Heart right ventricle (tissue), 16 donors: ENCODE measurements at regions of chr17 and their contacts with region 1.

Region 1: GRCh38 chr17:66737524-66737923 is 97.4 kb upstream of the CACNG5 start:
- DNase-seq: peak; percentile 40 to 46
- ATAC-seq: peak; percentile 85 to 97 (median 93)
- H3K4me3 ChIP-seq: no peak overlapping the region
- H3K27ac ChIP-seq: no peak overlapping the region
- H3K4me1 ChIP-seq: peaks cover 0 to 10% (median 0%) of the 10 kb centered on the region in 9 donors
- H3K27me3 ChIP-seq: no peaks in the 10 kb centered on the region
- CTCF ChIP-seq: peak in 6 of 9 donors; percentile 34 to 56 (median 42)

Region 2: DNA sequence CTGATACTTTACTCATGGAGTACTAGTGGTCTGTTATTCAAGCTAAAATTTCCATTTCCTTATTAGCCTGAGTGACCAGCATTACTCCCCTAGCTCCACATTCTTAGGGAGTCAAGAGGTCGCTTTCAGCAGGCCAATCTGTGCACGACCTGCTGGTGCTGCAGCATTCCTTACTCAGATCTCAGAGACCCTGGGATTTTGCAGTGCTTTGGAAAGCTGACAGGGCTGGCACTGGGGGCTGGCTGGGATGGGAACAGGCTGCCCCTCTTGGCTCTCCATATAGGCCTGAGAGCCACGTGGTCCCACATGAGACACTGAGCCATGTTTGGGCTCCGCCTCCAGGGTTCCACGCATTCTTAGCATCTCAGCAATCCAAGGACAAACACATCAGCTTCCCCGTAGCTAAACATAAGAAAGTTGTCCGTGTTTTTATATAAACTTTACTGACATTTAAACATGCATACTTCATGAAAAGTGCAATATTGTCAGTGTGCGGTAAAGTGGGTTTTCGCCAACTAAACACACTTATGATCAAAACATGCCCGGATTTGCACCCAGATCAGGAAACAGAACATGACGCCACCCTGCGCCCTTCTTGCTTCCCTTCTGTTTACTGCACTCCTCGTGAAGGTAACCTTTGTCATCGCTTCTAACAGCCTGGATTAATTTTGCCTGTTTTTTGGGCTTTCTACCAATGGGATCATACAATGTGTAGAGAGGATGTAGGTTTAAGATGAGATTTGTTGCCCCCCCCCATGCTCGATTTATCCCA is 157.2 kb before region 1 on chr17:
- intact Hi-C with region 1: no loop called
- DNase-seq: peak; percentile 29 to 31
- ATAC-seq: peak in 7 of 8 donors; percentile 65 to 88 (median 78)
- H3K4me3 ChIP-seq: no peak overlapping the region
- H3K27ac ChIP-seq: peak overlapping the region in 6 of 10 donors; percentile 6 to 56 (median 8)
- H3K4me1 ChIP-seq: peaks cover 0 to 34% (median 21%) of the 10 kb centered on the region in 9 donors
- H3K27me3 ChIP-seq: no peaks in the 10 kb centered on the region
- CTCF ChIP-seq: no peak

Region 3: DNA sequence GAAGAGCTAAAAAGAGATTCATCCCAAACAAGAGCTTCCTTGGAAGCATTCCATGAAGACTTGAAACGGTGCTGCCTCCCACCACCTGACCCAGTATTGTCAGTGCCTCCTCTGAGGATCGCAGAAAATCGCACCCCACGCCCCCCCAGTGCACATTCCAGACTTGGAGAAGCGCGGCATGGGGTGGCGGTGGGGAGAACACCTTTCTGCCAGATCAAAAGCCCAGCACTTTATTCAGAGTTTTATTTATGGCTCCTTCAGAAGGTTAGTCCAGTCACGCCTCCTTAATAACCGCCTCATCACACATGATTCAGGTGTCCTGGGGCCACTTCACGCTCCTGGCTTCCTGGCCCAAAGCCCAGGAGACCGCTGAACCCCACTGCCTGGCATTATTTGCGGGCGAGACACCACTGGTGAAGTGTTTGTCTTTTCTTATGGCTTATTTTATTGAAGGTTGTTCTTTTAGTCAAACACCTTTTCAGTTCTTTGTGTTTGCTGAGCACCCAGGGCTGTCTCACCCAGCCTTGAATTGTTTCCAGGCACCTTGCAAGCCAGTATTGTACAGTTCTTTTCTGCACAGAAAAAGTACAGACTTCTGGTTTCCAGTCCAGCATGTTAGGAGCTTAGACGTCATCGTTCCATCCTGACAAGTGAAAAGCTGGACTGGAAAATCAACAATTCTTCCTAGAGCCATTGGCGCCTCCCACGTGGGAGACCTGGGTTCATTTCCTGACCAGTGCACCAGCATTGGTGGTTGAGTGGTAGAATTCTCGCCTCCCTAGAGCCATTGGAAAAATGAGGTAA is 17.8 kb after region 1 on chr17:
- intact Hi-C with region 1: no loop called
- DNase-seq: no peak
- ATAC-seq: no peak
- H3K4me3 ChIP-seq: no peak overlapping the region
- H3K27ac ChIP-seq: no peak overlapping the region
- H3K4me1 ChIP-seq: no peaks in the 10 kb centered on the region
- H3K27me3 ChIP-seq: no peaks in the 10 kb centered on the region
- CTCF ChIP-seq: no peak

Region 4: GRCh38 chr17:66787914-66788313 is 50.4 kb after region 1 on chr17:
- intact Hi-C with region 1: loop called in 1 of 10 experiments (anchors 1 kb)
- DNase-seq: no peak
- ATAC-seq: peak in 4 of 8 donors; percentile 23 to 78 (median 40)
- H3K4me3 ChIP-seq: no peak overlapping the region
- H3K27ac ChIP-seq: peak overlapping the region in 1 of 10 donors; percentile 25
- H3K4me1 ChIP-seq: peaks cover 0 to 36% (median 13%) of the 10 kb centered on the region in 9 donors
- H3K27me3 ChIP-seq: no peaks in the 10 kb centered on the region
- CTCF ChIP-seq: no peak

Region 5: GRCh38 chr17:66814570-66814969 is 77.0 kb after region 1 on chr17:
- intact Hi-C with region 1: no loop called
- DNase-seq: no peak
- ATAC-seq: no peak
- H3K4me3 ChIP-seq: no peak overlapping the region
- H3K27ac ChIP-seq: no peak overlapping the region
- H3K4me1 ChIP-seq: no peaks in the 10 kb centered on the region
- H3K27me3 ChIP-seq: peaks cover 0 to 14% (median 0%) of the 10 kb centered on the region in 7 donors
- CTCF ChIP-seq: no peak

Region 6: DNA sequence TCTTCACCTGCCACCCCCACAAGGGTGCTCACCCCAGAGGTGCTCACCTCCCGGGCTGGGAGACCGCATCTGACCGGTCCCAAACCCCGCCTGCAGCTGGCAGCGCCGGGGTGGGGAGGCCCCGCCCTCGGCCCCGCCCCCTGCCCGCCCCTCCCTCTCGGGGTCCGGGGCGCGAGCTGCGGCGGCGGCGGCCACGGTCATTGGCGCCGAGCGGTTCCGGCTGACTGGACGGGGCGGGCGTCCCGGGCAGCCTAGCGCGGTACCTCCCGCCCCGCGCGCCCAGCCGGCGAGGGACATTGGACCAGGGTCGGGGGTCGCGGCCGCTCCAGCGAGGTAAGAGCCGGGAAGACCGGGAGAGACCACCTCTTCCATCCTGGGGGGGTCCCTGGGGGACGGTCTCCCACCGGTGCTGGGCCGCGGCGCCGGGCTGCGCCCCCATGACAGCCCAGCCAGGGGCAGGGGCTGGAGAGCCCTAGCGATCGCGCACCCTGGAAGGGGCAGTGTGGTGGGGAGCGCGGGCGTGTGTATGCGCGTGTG is 97.5 kb after region 1 on chr17 and contains the start of gene CACNG5:
- intact Hi-C with region 1: loop called in 1 of 10 experiments (anchors 5 kb)
- DNase-seq: no peak
- ATAC-seq: no peak
- H3K4me3 ChIP-seq: no peak within 1 kb of the TSS
- H3K27ac ChIP-seq: no peak within 1 kb of the TSS
- H3K4me1 ChIP-seq: no peaks in the 10 kb centered on the region
- H3K27me3 ChIP-seq: peaks cover 12 to 76% (median 64%) of the 10 kb centered on the region in 7 donors
- CTCF ChIP-seq: no peak
- total RNA-seq, gene CACNG5: not detected